CD4-positive, alpha-beta memory T cell (primary cell): ENCODE measurements at regions of chr12 and their contacts with region 1.

Region 1: DNA sequence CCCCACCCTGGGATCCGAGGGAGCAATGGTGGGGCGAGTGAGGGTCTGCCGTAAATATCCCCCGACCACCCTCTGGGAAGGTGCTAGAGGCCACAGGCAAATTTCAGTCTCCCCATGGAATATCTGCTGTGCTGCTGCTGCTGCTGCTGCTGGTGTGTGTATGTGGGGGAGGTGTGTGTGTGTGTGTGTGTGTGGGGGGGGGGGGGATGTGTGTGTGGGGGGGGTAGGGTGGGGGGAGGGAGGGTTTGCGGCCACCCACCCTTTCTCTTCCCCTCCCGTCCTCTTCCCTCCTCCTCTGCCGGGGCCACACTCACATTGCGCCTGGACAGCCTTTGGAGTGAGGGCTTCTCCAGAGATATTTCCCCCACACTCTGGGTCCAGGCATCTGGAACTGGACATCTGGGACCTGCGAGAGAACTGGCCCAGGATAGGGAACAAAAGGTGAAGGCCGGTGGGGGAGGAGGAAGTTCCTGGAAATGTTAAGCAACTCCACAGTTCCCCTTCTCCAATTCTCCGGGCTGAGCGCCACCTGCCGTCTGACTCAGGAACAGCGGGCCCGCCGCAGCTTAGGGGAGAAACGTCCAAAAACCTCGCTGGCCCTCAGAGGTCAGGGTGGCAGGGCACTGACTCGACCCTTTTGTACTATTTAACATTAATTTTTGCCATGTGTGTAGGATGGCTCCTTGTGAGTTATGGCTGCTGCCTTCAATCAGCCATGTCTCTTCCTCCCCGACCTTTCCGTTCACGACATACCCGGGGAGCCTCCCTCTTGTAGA is at the start of gene C1RL:
- DNase-seq: peak; percentile 63 to 73 (median 69)
- H3K4me3 ChIP-seq: peak within 1 kb of the TSS; percentile 54 to 94
- H3K4me3 Mint-ChIP-seq: peak within 1 kb of the TSS; percentile 93 to 96 (median 94)
- H3K27ac ChIP-seq: peak within 1 kb of the TSS; percentile 74
- H3K27ac Mint-ChIP-seq: peak within 1 kb of the TSS; percentile 91 to 97 (median 95)
- H3K4me1 ChIP-seq: peaks cover 38% of the 10 kb centered on the region
- H3K4me1 Mint-ChIP-seq: peaks cover 22 to 53% (median 40%) of the 10 kb centered on the region in 4 donors
- H3K27me3 ChIP-seq: no peaks in the 10 kb centered on the region
- H3K27me3 Mint-ChIP-seq: no peaks in the 10 kb centered on the region
- total RNA-seq, gene C1RL: 30.7 to 33.6 TPM

Region 2: GRCh38 chr12:6867413-6868210 is 241.4 kb before region 1 on chr12 and contains the start of gene TPI1:
- CTCF ChIA-PET with region 1: interaction called, 130 read pairs
- POLR2A ChIA-PET with region 1: interaction called, 21 read pairs
- intact Hi-C with region 1: loop called (anchors 1 kb)
- DNase-seq: peak; percentile 59 to 68 (median 62)
- H3K4me3 ChIP-seq: peak within 1 kb of the TSS; percentile 36 to 67
- H3K4me3 Mint-ChIP-seq: peak within 1 kb of the TSS; percentile 89 to 96 (median 92)
- H3K27ac ChIP-seq: peak within 1 kb of the TSS; percentile 69
- H3K27ac Mint-ChIP-seq: peak within 1 kb of the TSS; percentile 91 to 97 (median 93)
- H3K4me1 ChIP-seq: peaks cover 51% of the 10 kb centered on the region
- H3K4me1 Mint-ChIP-seq: peaks cover 33 to 58% (median 48%) of the 10 kb centered on the region in 4 donors
- H3K27me3 ChIP-seq: no peaks in the 10 kb centered on the region
- H3K27me3 Mint-ChIP-seq: no peaks in the 10 kb centered on the region
- total RNA-seq, gene TPI1: 155 to 164 TPM

Region 3: DNA sequence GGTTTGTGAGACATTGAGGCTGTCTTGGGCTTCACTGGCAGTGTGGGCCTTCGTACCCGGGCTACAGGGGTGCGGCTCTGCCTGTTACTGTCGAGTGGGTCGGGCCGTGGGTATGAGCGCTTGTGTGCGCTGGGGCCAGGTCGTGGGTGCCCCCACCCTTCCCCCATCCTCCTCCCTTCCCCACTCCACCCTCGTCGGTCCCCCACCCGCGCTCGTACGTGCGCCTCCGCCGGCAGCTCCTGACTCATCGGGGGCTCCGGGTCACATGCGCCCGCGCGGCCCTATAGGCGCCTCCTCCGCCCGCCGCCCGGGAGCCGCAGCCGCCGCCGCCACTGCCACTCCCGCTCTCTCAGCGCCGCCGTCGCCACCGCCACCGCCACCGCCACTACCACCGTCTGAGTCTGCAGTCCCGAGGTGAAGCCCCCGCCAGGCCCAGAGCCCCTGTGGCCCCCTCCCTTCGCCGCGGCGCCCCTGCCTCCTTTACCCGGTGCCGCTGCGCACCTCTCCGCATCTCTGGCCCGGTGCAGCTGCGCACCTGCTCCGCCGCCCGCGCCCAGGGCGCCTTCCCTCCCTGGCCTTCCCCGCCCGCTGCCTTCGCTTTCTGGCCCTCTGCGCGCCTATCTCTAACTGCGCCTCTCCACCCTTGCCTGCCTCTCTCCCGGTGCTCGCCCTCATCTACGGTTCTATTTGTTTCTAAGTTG is 194.6 kb before region 1 on chr12 and contains the start of gene ENO2:
- CTCF ChIA-PET with region 1: interaction called, 3 read pairs
- POLR2A ChIA-PET with region 1: interaction called, 14 read pairs
- intact Hi-C with region 1: no loop called
- DNase-seq: peak; percentile 83 to 93 (median 85)
- H3K4me3 ChIP-seq: peak within 1 kb of the TSS; percentile 69 to 76
- H3K4me3 Mint-ChIP-seq: peak within 1 kb of the TSS; percentile 90 to 98 (median 96)
- H3K27ac ChIP-seq: peak within 1 kb of the TSS; percentile 77
- H3K27ac Mint-ChIP-seq: peak within 1 kb of the TSS; percentile 88 to 98 (median 96)
- H3K4me1 ChIP-seq: peaks cover 29% of the 10 kb centered on the region
- H3K4me1 Mint-ChIP-seq: peaks cover 12 to 44% (median 27%) of the 10 kb centered on the region in 4 donors
- H3K27me3 ChIP-seq: no peaks in the 10 kb centered on the region
- H3K27me3 Mint-ChIP-seq: no peaks in the 10 kb centered on the region
- total RNA-seq, gene ENO2: 187 to 190 TPM

Region 4: GRCh38 chr12:6937481-6938297 is 171.3 kb before region 1 on chr12:
- CTCF ChIA-PET with region 1: interaction called, 6 read pairs
- POLR2A ChIA-PET with region 1: interaction called, 19 read pairs
- intact Hi-C with region 1: no loop called
- DNase-seq: peak; percentile 92 to 96 (median 95)
- H3K4me3 ChIP-seq: peak overlapping the region; percentile 47 to 82
- H3K4me3 Mint-ChIP-seq: peak overlapping the region; percentile 80 to 88 (median 84)
- H3K27ac ChIP-seq: peak overlapping the region; percentile 95
- H3K27ac Mint-ChIP-seq: peak overlapping the region; percentile 93 to 99 (median 94)
- H3K4me1 ChIP-seq: peaks cover 29% of the 10 kb centered on the region
- H3K4me1 Mint-ChIP-seq: peaks cover 20 to 48% (median 35%) of the 10 kb centered on the region in 4 donors
- H3K27me3 ChIP-seq: no peaks in the 10 kb centered on the region
- H3K27me3 Mint-ChIP-seq: no peaks in the 10 kb centered on the region

Region 5: DNA sequence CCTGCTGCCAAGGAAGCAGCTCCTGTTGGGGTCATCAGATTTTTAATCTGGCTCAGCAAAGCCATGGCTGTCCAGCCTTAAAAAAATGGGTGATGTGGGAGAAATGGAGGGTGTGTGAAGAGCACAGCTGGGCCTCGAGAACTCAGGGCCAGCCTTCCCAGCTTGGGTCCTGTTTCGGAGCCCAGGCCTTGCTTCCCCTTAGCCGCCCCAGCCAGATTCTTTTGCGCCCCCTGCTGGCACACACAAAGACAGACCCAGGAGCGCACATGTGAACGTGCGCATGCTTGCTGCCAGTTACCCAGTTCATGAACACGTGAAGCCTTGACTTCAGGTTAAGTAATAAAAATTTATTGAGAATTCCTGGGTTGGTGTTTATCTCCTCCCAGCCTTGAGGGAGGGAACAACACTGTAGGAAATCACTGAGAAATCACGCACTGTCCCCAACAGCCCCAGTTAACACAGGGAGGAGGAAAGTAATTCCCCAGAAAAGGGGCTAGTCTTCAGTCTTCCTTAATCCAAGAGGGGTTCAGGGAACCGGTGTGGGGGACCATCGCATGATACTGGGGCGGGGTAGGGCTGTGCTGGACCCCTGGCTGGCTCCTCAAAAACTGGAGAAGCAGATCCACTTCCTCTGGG is 143.8 kb before region 1 on chr12:
- CTCF ChIA-PET with region 1: interaction called, 16 read pairs
- POLR2A ChIA-PET with region 1: interaction called, 27 read pairs
- intact Hi-C with region 1: loop called (anchors 1 kb)
- DNase-seq: peak; percentile 85 to 87 (median 85)
- H3K4me3 ChIP-seq: no peak overlapping the region
- H3K4me3 Mint-ChIP-seq: peak overlapping the region in 1 of 8 donors; percentile 39
- H3K27ac ChIP-seq: peak overlapping the region; percentile 53
- H3K27ac Mint-ChIP-seq: peak overlapping the region; percentile 88 to 94 (median 93)
- H3K4me1 ChIP-seq: peaks cover 68% of the 10 kb centered on the region
- H3K4me1 Mint-ChIP-seq: peaks cover 32 to 63% (median 47%) of the 10 kb centered on the region in 4 donors
- H3K27me3 ChIP-seq: no peaks in the 10 kb centered on the region
- H3K27me3 Mint-ChIP-seq: no peaks in the 10 kb centered on the region

Region 6: GRCh38 chr12:7129872-7130680 is 21.1 kb after region 1 on chr12 and contains the start of gene CLSTN3:
- CTCF ChIA-PET with region 1: interaction called, 5 read pairs
- POLR2A ChIA-PET with region 1: interaction called, 5 read pairs
- intact Hi-C with region 1: loop called (anchors 2 kb)
- DNase-seq: peak; percentile 82 to 91 (median 85)
- H3K4me3 ChIP-seq: peak within 1 kb of the TSS; percentile 85 to 94
- H3K4me3 Mint-ChIP-seq: peak within 1 kb of the TSS; percentile 95 to 99 (median 96)
- H3K27ac ChIP-seq: peak within 1 kb of the TSS; percentile 80
- H3K27ac Mint-ChIP-seq: peak within 1 kb of the TSS; percentile 94 to 99 (median 97)
- H3K4me1 ChIP-seq: peaks cover 24% of the 10 kb centered on the region
- H3K4me1 Mint-ChIP-seq: peaks cover 23 to 49% (median 29%) of the 10 kb centered on the region in 4 donors
- H3K27me3 ChIP-seq: no peaks in the 10 kb centered on the region
- H3K27me3 Mint-ChIP-seq: no peaks in the 10 kb centered on the region
- total RNA-seq, gene CLSTN3: 50.7 to 58.5 TPM